ENCODE measurements at regions of chr10 and their contacts with region 1.

Region 1: DNA sequence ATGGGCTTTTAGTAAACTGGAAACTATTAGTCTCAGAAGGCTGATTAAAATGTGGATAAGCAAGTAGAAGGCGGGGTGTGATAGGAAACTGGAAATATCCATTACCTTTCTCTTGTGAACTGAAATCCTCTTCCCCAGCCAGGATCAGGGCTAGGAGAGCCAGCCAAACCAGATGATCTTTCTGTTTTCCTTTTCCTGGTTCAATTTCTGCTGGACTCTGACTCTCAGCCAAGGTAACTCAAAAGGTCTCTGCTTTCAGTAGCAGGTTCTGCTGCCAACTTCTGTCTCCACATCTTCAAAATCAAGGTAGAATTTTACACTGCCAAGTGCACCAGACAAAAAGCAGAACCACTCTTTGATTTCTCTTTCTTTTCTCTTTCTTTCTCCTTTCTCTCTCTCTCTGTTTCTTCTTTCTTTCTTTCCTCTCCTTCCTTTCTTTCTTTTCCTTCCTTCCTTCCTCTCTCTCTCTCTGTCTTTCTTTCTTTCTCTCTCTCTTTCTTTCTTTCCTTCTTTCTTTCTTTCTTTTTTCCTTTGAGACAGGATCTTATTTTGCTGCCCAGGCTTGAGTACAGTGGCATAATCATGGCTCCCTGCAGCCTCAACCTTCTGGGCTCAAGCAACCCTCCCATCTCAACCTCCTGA is 30.8 kb downstream of the OTUD1 start:
- DNase-seq: no peak
- ATAC-seq: no peak
- H3K4me3 ChIP-seq: no peak overlapping the region
- H3K27ac ChIP-seq: no peak overlapping the region
- H3K4me1 ChIP-seq: peaks cover 0 to 11% (median 2%) of the 10 kb centered on the region in 12 donors
- H3K27me3 ChIP-seq: peaks cover 0 to 6% (median 0%) of the 10 kb centered on the region in 9 donors
- CTCF ChIP-seq: no peak
- POLR2A ChIP-seq: no peak

Region 2: DNA sequence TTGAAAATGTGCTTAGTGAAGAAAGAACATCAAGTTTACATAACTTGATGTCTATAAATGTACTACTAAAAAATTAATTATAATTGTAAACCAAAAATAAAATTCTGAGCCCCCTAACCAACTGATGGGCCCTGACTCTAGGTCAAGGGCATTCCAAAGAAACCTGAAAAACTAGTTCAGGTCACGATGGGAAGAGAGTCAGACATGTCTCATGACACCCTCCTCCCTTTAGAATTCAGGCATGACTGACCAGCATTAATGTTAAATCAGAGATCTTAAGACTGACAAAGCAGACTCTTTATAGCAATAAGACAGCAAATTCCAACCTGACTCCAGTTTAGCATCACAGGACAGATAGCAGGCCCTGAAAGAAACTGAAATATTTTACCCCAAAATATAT is 52.5 kb before region 1 on chr10:
- intact Hi-C with region 1: loop called in 1 of 10 experiments (anchors 5 kb)
- DNase-seq: no peak
- ATAC-seq: no peak
- H3K4me3 ChIP-seq: no peak overlapping the region
- H3K27ac ChIP-seq: no peak overlapping the region
- H3K4me1 ChIP-seq: peaks cover 0 to 10% (median 0%) of the 10 kb centered on the region in 12 donors
- H3K27me3 ChIP-seq: no peaks in the 10 kb centered on the region
- CTCF ChIP-seq: no peak
- POLR2A ChIP-seq: no peak

Region 3: DNA sequence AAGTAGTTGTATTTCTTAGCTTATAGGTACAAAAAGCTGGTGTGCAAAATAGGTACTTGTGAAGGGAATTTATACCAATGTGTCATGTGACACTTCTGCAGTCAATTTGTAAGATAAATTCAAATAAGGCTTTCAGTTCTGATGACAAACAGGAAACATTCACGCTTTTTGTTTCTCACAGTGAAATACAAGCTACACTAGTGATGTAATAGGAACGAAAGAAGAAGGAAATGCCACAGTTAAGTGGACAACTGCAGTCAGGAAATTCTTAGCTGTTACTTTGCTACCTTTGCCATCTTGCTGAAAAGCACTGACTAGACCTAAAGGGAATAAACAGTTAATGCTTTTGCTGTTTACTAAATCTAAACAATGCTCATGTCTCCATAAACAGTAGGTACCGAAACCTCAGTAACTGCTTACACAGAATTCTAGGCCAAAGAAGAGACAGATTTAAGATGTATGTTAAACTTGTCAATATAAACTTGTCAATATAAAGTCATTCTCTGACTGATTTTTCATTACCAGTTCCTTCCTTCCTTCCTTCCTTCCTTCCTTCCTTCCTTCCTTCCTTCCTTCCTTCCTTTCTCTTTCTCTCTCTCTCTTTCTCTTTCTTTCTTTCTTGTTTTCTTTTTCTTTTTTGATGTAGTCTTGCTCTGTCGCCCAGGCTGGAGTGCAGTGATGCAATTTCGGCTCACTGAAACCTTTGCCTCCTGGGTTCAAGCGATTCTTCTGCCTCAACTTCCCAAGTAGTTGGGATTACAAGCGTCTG is 20.7 kb before region 1 on chr10:
- intact Hi-C with region 1: no loop called
- DNase-seq: no peak
- ATAC-seq: no peak
- H3K4me3 ChIP-seq: no peak overlapping the region
- H3K27ac ChIP-seq: peak overlapping the region in 3 of 12 donors; percentile 1 to 26 (median 17)
- H3K4me1 ChIP-seq: peaks cover 0 to 64% (median 14%) of the 10 kb centered on the region in 12 donors
- H3K27me3 ChIP-seq: no peaks in the 10 kb centered on the region
- CTCF ChIP-seq: no peak
- POLR2A ChIP-seq: no peak

Measured in heart left ventricle (tissue), 16 donors.